B cell (primary cell): ENCODE measurements at regions of chr15 and their contacts with region 1.

Region 1: GRCh38 chr15:59688841-59689625 is at the start of gene BNIP2:
- DNase-seq: peak; percentile 99
- ATAC-seq: peak; percentile 89
- H3K4me3 ChIP-seq: peak within 1 kb of the TSS; percentile 66 to 99 (median 97)
- H3K4me3 Mint-ChIP-seq: peak within 1 kb of the TSS; percentile 89
- H3K27ac ChIP-seq: peak within 1 kb of the TSS; percentile 93 to 98
- H3K27ac Mint-ChIP-seq: peak within 1 kb of the TSS; percentile 98
- H3K4me1 ChIP-seq: peaks cover 43% of the 10 kb centered on the region in 2 donors
- H3K4me1 Mint-ChIP-seq: peaks cover 48% of the 10 kb centered on the region
- H3K27me3 ChIP-seq: no peaks in the 10 kb centered on the region
- H3K27me3 Mint-ChIP-seq: no peaks in the 10 kb centered on the region
- CTCF ChIP-seq: no peak
- total RNA-seq, gene BNIP2: 91.2 and 112 TPM in 2 replicates

Region 2: GRCh38 chr15:58770857-58771620 is 918.0 kb before region 1 on chr15 and contains the start of gene MINDY2:
- CTCF ChIA-PET with region 1: no interaction called
- POLR2A ChIA-PET with region 1: interaction called, 7 read pairs
- intact Hi-C with region 1: loop called (anchors 5 kb)
- DNase-seq: peak; percentile 97
- ATAC-seq: peak; percentile 95
- H3K4me3 ChIP-seq: peak within 1 kb of the TSS; percentile 80 to 99 (median 94)
- H3K4me3 Mint-ChIP-seq: peak within 1 kb of the TSS; percentile 90
- H3K27ac ChIP-seq: peak within 1 kb of the TSS; percentile 86 to 87
- H3K27ac Mint-ChIP-seq: peak within 1 kb of the TSS; percentile 96
- H3K4me1 ChIP-seq: peaks cover 28 to 32% of the 10 kb centered on the region in 2 donors
- H3K4me1 Mint-ChIP-seq: peaks cover 19% of the 10 kb centered on the region
- H3K27me3 ChIP-seq: no peaks in the 10 kb centered on the region
- H3K27me3 Mint-ChIP-seq: no peaks in the 10 kb centered on the region
- CTCF ChIP-seq: peak; percentile 46
- total RNA-seq, gene MINDY2: 16.6 and 17.0 TPM in 2 replicates

Region 3: DNA sequence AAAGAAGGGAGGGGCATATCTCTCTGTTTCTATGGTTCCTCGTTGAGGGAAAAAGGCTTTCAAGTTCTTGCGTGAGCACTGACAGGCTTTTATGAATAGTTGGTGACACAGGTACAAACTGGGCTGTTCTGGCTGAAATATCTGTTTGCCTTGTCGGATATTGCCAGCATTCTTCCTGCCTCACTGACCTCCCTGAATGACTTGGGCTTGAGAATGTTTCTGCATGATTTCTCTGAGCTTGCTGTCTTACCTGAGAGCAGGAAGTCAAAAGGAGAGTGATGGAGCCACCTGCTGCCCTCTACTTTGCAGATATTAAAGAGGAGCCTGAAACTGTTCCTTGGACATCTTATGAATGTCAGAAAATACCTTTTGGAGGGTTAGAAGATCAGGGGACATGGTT is 72.7 kb before region 1 on chr15:
- CTCF ChIA-PET with region 1: no interaction called
- POLR2A ChIA-PET with region 1: no interaction called
- intact Hi-C with region 1: loop called (anchors 2 kb)
- DNase-seq: no peak
- ATAC-seq: no peak
- H3K4me3 ChIP-seq: no peak overlapping the region
- H3K4me3 Mint-ChIP-seq: no peak overlapping the region
- H3K27ac ChIP-seq: no peak overlapping the region
- H3K27ac Mint-ChIP-seq: peak overlapping the region; percentile 23
- H3K4me1 ChIP-seq: peaks cover 11 to 14% of the 10 kb centered on the region in 2 donors
- H3K4me1 Mint-ChIP-seq: peaks cover 17% of the 10 kb centered on the region
- H3K27me3 ChIP-seq: peaks cover 0 to 16% (median 3%) of the 10 kb centered on the region in 4 experiments
- H3K27me3 Mint-ChIP-seq: peaks cover 27% of the 10 kb centered on the region
- CTCF ChIP-seq: no peak

Region 4: GRCh38 chr15:59646277-59646676 is 42.8 kb before region 1 on chr15:
- CTCF ChIA-PET with region 1: no interaction called
- POLR2A ChIA-PET with region 1: no interaction called
- intact Hi-C with region 1: no loop called
- DNase-seq: no peak
- ATAC-seq: no peak
- H3K4me3 ChIP-seq: no peak overlapping the region
- H3K4me3 Mint-ChIP-seq: no peak overlapping the region
- H3K27ac ChIP-seq: no peak overlapping the region
- H3K27ac Mint-ChIP-seq: no peak overlapping the region
- H3K4me1 ChIP-seq: no peaks in the 10 kb centered on the region
- H3K4me1 Mint-ChIP-seq: no peaks in the 10 kb centered on the region
- H3K27me3 ChIP-seq: no peaks in the 10 kb centered on the region
- H3K27me3 Mint-ChIP-seq: no peaks in the 10 kb centered on the region
- CTCF ChIP-seq: no peak

Region 5: DNA sequence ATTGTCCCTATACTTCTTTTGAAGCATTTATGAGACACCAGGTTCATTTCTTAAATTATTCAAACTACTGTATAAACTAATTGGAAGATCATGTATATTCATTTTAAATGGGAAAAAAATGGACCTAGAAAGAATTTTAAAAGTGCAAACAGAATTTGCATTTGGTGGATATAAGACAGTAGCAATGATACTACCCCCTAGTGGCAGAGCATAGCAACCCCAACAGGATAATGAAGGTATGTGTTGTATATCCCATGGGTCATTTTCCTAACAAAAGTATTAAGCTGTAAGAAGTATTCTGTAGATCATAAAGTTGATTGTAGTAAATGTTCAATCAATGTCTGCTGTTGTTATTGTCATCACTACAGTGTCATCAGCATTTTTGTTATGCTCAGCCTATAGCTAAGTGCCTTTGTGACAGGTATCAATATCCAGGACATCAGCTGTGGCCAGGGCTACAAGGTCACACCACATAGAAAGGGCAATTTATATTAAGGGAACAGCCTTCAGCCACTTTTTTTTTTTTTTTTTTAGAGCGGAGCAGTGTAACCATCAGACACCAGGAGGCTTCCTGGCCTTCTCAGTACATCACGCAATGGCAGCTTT is 490.9 kb after region 1 on chr15:
- CTCF ChIA-PET with region 1: interaction called, 92 read pairs
- POLR2A ChIA-PET with region 1: no interaction called
- intact Hi-C with region 1: loop called (anchors 1 kb)
- DNase-seq: peak; percentile 61
- ATAC-seq: peak; percentile 60
- H3K4me3 ChIP-seq: no peak overlapping the region
- H3K4me3 Mint-ChIP-seq: no peak overlapping the region
- H3K27ac ChIP-seq: no peak overlapping the region
- H3K27ac Mint-ChIP-seq: no peak overlapping the region
- H3K4me1 ChIP-seq: no peaks in the 10 kb centered on the region
- H3K4me1 Mint-ChIP-seq: no peaks in the 10 kb centered on the region
- H3K27me3 ChIP-seq: no peaks in the 10 kb centered on the region
- H3K27me3 Mint-ChIP-seq: peaks cover 28% of the 10 kb centered on the region
- CTCF ChIP-seq: peak; percentile 94

Region 6: DNA sequence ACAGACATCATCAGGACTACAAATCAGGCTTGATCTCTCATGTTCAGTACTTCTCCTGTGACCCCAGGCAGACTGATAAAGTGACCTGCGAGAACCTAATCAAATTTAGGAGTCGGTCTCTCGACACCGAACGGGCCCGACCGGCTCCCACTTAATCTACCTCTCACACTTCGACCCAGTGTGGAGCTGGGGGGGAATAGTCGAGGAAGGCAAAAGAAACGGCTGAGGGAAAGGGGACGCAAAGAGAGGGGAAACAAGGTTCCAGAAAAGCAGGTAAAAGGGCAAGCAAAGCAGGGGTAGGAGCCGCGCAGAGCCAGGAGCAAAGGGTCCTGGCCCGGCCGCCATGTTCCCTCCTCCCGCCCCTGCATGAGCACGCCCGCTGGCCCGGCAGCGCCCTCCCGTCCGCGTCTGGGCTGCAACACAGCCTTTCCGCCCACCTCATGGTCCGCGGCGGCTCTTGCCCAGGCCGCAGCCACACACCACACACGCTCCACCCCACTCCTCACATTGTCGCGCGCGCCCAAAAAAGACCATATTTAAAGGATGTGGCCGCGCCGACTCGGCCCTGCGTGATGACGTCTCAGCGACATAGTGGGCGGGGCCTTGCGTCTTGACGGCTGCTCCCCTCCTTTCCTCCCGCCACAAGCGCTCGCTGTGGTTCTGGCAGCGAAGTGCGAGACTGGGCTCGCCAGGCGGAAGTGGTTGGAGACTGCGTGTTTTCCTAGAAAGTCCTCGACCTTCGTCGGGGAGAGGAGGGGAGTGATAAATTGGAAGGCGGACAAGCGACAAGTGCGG is 789.7 kb after region 1 on chr15 and contains the start of gene ICE2:
- CTCF ChIA-PET with region 1: no interaction called
- POLR2A ChIA-PET with region 1: no interaction called
- intact Hi-C with region 1: loop called (anchors 1 kb)
- DNase-seq: peak; percentile 95
- ATAC-seq: peak; percentile 93
- H3K4me3 ChIP-seq: peak within 1 kb of the TSS; percentile 76 to 97 (median 89)
- H3K4me3 Mint-ChIP-seq: peak within 1 kb of the TSS; percentile 99
- H3K27ac ChIP-seq: peak within 1 kb of the TSS; percentile 85 to 95
- H3K27ac Mint-ChIP-seq: peak within 1 kb of the TSS; percentile 97
- H3K4me1 ChIP-seq: peaks cover 23 to 28% of the 10 kb centered on the region in 2 donors
- H3K4me1 Mint-ChIP-seq: peaks cover 52% of the 10 kb centered on the region
- H3K27me3 ChIP-seq: no peaks in the 10 kb centered on the region
- H3K27me3 Mint-ChIP-seq: no peaks in the 10 kb centered on the region
- CTCF ChIP-seq: no peak
- total RNA-seq, gene ICE2: 65.9 and 71.2 TPM in 2 replicates

Region 7: DNA sequence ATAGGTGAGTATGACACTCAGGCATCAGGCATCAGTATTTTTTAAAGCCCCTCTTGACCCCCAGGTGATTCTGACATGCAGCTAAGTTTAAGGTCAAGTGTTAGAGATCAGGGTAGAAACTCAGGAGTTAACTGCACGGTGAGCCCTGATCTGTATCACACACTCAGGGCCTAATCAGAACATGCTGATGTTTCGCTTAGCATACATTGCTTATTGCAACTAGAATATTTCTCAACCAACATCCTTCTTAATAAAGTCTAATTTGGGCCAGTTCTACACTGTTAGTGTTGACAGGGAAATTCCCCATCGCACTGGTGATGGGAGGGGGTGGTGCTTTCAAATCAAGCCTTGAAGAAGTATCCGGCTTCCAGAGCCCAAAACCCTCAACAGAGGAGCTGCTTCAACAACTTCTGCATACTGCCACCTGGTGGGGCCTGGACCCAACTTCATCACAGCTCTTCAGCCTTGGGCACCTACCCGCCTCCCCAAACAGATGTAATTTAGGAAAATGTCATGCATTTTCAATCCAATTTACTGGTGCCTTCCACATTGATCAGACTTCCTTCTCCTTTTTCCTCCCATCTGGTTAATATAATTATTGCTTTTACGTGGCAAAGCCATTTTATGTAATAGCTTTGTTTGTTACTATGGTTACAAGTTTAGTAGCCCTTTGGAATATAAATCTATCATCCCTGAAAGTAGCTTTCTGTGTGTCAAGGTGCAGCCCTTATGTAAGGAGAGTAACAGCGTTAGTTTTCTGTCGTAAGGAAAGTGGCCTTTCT is 1227.8 kb after region 1 on chr15:
- CTCF ChIA-PET with region 1: interaction called, 4 read pairs
- POLR2A ChIA-PET with region 1: no interaction called
- intact Hi-C with region 1: loop called (anchors 5 kb)
- DNase-seq: peak; percentile 86
- ATAC-seq: peak; percentile 95
- H3K4me3 ChIP-seq: no peak overlapping the region
- H3K4me3 Mint-ChIP-seq: no peak overlapping the region
- H3K27ac ChIP-seq: peak overlapping the region in 1 of 2 donors; percentile 12
- H3K27ac Mint-ChIP-seq: no peak overlapping the region
- H3K4me1 ChIP-seq: peaks cover 11 to 13% of the 10 kb centered on the region in 2 donors
- H3K4me1 Mint-ChIP-seq: peaks cover 14% of the 10 kb centered on the region
- H3K27me3 ChIP-seq: peaks cover 0 to 2% (median 0%) of the 10 kb centered on the region in 4 experiments
- H3K27me3 Mint-ChIP-seq: no peaks in the 10 kb centered on the region
- CTCF ChIP-seq: peak; percentile 86